ENCODE measurements at regions of chr1 and their contacts with region 1.

Region 1: DNA sequence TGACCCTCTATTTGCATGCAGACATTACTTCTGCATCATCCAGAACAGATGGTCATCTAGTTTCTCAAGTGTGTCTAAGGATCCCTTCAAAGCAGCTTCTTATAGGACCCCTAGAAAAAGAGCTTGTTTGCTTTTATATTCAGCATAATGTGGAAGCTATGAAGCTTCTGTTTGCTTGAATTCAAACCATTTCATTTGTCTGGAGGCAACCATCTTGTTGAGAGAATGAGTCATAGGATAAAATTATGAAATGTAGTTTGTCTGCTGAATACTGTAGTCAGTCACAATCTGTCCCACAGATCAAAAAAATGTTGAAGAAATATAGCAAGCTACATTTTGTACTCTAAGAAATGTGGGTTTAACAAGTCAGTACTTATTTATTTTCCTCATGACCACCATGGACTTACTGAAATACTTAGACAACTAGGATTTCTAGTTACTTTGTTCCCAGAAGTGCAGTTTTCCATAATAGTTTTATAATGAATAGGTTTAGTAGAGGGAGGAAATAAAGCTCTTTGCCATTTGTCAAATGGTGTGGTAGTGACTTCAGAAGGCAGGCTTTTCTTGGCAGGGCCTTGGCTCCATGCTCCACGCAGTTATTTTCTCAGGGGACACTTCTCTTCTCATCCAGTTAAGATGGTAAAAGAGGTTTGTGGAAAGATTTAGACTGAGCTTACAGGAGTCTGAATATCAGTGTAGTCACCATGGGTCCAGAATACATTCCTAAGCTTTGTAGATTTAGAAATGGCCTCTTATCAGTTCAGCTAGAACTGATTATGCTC is 74.8 kb upstream of the DEPDC1 start:
- DNase-seq: no peak
- ATAC-seq: peak in 1 of 2 donors; percentile 27

Region 2: DNA sequence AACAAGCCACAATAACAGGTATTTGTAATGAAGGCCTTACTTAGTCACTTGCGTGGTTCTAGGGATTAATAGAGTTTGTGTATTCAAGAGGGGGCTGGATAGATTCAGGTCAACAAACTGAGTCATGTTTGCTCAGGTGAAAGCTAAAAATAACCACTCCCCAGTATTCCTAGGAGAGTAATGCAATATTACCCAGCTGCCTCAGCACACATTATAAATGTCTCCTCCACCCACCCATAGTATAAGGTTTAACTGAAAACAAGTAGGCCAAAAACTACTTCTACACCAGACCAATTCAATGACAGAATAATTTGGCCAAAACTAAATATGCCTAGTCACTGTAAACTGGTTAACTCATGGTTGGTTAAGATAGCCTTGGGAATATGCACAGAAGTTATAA is 373.8 kb before region 1 on chr1:
- intact Hi-C with region 1: no loop called
- DNase-seq: no peak
- ATAC-seq: peak in 1 of 2 donors; percentile 38

Region 3: DNA sequence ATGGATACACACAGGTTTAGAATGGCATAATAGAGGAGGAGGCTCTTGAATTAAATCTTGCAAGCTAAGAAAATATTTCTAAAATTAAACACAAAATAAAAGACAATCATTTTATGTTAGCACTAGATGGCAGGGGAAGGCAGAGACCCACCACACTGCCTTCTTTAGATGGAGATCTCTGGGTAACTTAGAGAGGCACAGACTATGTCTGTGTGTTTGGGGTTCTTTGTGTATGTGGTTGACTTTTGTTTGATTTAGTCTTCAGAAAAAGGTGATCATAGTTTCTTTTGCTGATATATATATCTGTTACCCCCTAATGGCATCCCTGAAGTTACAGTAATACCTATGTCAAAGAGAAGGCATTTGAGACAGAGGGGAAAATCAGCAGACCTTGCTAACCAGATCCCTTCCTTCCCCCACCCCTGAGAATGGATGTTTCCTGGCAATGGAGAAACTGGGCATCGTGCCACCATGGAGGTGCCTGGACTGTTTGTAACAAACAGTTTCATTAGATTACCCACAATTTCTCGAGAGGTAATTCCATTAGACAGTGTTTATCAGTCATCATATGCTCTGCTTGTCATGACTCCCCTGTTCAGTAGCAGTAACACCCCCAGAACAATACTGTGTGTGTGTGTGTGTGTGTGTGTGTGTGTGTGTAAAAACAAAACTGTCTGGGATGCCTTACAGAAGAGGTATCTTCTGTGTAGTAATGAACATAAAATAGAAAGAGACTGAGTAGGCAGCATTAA is 153.5 kb after region 1 on chr1:
- intact Hi-C with region 1: no loop called
- DNase-seq: peak; percentile 77
- ATAC-seq: peak; percentile 89 to 92

Region 4: DNA sequence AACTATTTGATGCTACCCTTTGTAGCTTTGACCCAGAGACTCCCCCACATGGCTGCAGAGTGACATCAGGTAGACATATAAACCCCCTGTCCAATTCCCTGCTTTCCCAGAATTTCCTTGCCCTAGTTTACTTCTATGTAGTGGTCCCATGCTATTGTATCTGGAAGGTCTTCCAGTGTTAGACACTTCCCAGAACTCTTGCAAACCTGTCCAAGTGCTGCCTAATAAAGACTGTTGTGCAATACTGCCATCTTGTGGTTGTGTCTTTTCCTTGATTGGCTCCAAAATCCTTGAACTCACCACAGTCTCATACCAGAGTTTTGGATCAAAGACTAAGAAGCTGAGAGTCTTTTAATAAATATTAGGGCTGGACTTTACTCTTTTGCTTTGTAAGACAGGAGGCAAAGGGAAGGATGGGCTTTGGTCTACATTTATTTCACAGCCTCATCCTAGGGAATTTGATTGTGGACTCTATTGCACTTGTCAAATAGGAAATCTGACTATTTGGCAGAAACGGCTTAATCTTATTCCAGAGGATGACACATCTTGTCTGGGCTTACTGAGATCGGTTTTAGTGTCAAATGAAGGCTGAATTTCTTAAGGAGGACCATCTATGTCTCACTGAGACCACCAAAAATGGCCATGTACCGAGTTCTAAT is 1166.0 kb after region 1 on chr1:
- intact Hi-C with region 1: loop called in 1 of 2 experiments (anchors 10 kb)
- DNase-seq: no peak
- ATAC-seq: peak; percentile 53 to 71